GM12878 (cell line): ENCODE measurements at regions of chr20 and their contacts with region 1.

Region 1: DNA sequence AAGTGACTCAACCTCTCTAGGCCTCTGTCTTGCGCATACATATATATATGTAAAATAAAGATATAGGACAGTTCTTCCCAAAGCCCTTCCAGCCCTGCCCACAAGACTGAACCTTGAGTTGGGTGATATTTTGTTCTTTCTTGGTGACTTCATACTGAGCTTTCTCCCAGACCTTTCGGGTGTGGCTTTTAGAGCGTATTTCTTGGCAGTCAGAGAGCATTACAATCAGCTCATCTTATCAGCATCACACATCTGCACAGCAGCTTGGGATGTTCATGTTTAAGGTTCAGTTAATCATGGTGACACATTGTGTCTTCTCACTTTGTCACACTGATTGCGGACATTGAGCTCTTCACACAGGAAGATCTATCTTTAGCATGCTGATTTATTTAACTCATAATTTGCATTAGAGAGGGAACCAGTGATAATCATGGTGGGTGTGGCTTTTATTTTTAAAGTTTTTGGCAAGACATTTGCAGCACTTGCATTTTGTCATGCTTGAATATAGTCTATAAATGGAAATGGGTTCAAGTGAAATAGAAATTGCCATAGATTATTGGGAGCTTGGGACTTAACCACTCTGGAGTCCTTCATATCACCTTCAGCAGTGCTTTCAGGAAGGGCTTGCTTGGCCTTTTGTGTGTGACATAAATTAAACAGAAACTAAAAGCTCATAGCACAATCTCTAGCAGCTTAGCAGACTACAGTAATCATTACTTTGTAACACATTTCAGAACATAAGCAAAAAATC is 8.3 kb downstream of the KIF3B start:
- DNase-seq: peak; percentile 84
- ATAC-seq: peak; percentile 85
- H3K4me3 ChIP-seq: peak overlapping the region; percentile 54
- H3K27ac ChIP-seq: peak overlapping the region; percentile 92
- H3K4me1 ChIP-seq: peaks cover 31% of the 10 kb centered on the region
- H3K27me3 ChIP-seq: no peaks in the 10 kb centered on the region
- CTCF ChIP-seq: no peak
- EP300 ChIP-seq: peak in 1 of 2 experiments; percentile 44; a peak in 1 of 4 replicates
- POLR2A ChIP-seq: peak; percentile 65
- RAD21 ChIP-seq: no peak

Region 2: GRCh38 chr20:31803552-31804291 is 482.1 kb before region 1 on chr20:
- CTCF ChIA-PET with region 1: no interaction called
- POLR2A ChIA-PET with region 1: no interaction called
- RAD21 ChIA-PET with region 1: no interaction called
- SMC1A ChIA-PET with region 1: no interaction called
- in situ Hi-C with region 1: no loop called
- intact Hi-C with region 1: no loop called
- DNase-seq: no peak
- ATAC-seq: no peak
- H3K4me3 ChIP-seq: no peak overlapping the region
- H3K27ac ChIP-seq: no peak overlapping the region
- H3K4me1 ChIP-seq: no peaks in the 10 kb centered on the region
- H3K27me3 ChIP-seq: no peaks in the 10 kb centered on the region
- CTCF ChIP-seq: no peak
- EP300 ChIP-seq: no peak
- POLR2A ChIP-seq: no peak
- RAD21 ChIP-seq: no peak

Region 3: DNA sequence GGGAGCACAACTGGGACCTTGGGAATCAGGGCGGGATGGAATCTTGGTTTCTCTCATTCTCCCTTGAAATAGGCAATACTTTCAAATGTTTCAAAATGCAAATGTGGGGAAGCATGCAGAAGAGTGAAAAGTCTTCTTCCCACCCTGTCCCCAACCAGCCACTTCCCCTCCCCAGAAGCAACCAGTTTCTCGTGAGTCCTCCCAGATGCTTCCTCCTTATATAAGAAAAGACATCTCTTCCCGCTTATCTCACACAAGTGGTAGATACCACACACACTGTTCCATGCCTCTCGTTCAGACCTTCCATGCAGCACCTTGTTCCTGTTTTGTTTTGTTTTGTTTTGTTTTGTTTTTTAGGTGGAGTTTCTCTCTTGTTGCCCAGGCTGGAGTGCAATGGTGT is 208.6 kb before region 1 on chr20:
- CTCF ChIA-PET with region 1: no interaction called
- POLR2A ChIA-PET with region 1: no interaction called
- RAD21 ChIA-PET with region 1: no interaction called
- SMC1A ChIA-PET with region 1: no interaction called
- in situ Hi-C with region 1: no loop called
- intact Hi-C with region 1: no loop called
- DNase-seq: no peak
- ATAC-seq: no peak
- H3K4me3 ChIP-seq: no peak overlapping the region
- H3K27ac ChIP-seq: no peak overlapping the region
- H3K4me1 ChIP-seq: no peaks in the 10 kb centered on the region
- H3K27me3 ChIP-seq: no peaks in the 10 kb centered on the region
- CTCF ChIP-seq: no peak
- EP300 ChIP-seq: no peak
- POLR2A ChIP-seq: no peak
- RAD21 ChIP-seq: no peak

Region 4: DNA sequence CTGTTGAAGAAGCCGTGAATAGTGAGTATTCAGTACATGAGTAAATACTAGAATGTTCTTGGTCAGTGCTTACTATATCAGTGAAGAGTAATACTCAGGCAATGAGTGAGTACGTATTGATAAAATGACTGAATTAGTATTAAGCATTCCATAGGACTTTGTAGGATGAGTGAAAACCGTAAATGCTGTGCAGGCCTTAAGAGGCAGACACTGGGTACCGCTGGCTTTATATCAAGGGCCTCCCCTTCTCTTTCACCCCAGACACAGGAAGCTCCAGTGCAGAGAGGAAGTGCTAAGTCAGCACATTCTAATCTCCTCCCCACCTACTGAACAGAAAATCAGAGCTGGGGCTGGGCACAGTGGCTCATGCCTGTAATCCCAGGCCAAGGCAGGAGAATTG is 53.9 kb before region 1 on chr20:
- CTCF ChIA-PET with region 1: interaction called, 3 read pairs
- POLR2A ChIA-PET with region 1: interaction called, 9 read pairs
- RAD21 ChIA-PET with region 1: interaction called, 15 read pairs
- SMC1A ChIA-PET with region 1: interaction called, 15 read pairs
- in situ Hi-C with region 1: no loop called
- intact Hi-C with region 1: no loop called
- DNase-seq: no peak
- ATAC-seq: peak; percentile 71
- H3K4me3 ChIP-seq: no peak overlapping the region
- H3K27ac ChIP-seq: peak overlapping the region; percentile 9; the same call in 1 of the 2 replicates
- H3K4me1 ChIP-seq: peaks cover 10% of the 10 kb centered on the region; the same call in 1 of the 2 replicates
- H3K27me3 ChIP-seq: no peaks in the 10 kb centered on the region
- CTCF ChIP-seq: no peak
- EP300 ChIP-seq: no peak
- POLR2A ChIP-seq: no peak
- RAD21 ChIP-seq: no peak

Region 5: DNA sequence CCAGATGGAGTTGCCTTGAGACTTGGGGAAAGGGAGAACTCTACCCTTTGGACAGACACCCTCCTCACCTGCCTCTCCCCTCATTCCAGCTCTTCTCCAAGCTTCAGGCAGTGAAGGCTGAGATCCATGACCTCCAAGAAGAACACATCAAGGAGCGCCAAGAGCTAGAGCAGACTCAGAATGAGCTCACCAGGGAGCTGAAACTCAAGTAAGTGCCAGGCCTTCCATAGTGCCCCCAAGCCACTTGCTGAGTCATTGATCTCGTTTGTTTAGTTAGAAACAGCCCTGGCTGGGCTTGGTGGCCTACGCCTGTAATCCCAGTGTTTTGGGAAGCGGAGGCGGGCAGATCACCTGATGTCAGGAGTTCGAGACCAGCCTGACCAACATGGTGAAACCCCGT is 30.9 kb after region 1 on chr20:
- CTCF ChIA-PET with region 1: interaction called, 4 read pairs
- POLR2A ChIA-PET with region 1: interaction called, 3 read pairs
- RAD21 ChIA-PET with region 1: interaction called, 3 read pairs
- SMC1A ChIA-PET with region 1: interaction called, 11 read pairs
- in situ Hi-C with region 1: no loop called
- intact Hi-C with region 1: no loop called
- DNase-seq: no peak
- ATAC-seq: no peak
- H3K4me3 ChIP-seq: no peak overlapping the region
- H3K27ac ChIP-seq: no peak overlapping the region
- H3K4me1 ChIP-seq: no peaks in the 10 kb centered on the region; the same call in 1 of the 2 replicates
- H3K27me3 ChIP-seq: no peaks in the 10 kb centered on the region
- CTCF ChIP-seq: no peak
- EP300 ChIP-seq: no peak
- POLR2A ChIP-seq: no peak
- RAD21 ChIP-seq: no peak

Region 6: DNA sequence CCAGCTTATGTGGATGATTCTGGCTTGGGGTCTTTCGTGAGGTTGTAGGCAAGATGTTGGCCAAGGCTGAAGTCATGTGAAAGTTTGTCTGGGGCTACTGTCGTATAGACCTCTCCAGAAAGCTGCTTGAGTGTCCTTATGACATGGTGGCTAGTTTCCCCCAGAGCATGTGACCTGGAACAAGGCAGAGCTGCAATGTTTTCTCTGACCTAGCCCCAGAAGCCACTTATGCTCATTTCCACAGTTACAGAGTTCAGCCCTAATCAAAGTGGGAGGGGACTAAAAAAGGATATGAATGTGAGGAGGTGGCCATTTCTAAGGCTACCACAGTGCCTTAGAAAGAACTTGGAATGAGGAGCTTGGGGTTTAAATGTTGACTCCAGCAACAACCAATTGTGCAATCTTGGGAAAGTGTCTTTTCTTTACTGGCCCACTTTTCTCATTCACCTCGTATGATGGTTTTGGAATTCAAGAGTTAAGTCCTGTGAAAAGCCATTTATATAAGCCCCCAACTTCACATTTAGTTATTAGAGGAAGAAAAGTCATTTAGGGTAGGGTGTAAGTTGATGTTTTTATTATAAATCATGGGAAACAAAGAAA is 66.4 kb after region 1 on chr20:
- CTCF ChIA-PET with region 1: interaction called, 12 read pairs
- POLR2A ChIA-PET with region 1: interaction called, 38 read pairs
- RAD21 ChIA-PET with region 1: interaction called, 28 read pairs
- SMC1A ChIA-PET with region 1: interaction called, 23 read pairs
- in situ Hi-C with region 1: no loop called
- intact Hi-C with region 1: no loop called
- DNase-seq: no peak
- ATAC-seq: no peak
- H3K4me3 ChIP-seq: no peak overlapping the region
- H3K27ac ChIP-seq: no peak overlapping the region
- H3K4me1 ChIP-seq: peaks cover 32% of the 10 kb centered on the region
- H3K27me3 ChIP-seq: no peaks in the 10 kb centered on the region
- CTCF ChIP-seq: no peak
- EP300 ChIP-seq: no peak
- POLR2A ChIP-seq: no peak
- RAD21 ChIP-seq: no peak

Region 7: GRCh38 chr20:32378461-32378860 is 92.7 kb after region 1 on chr20:
- CTCF ChIA-PET with region 1: no interaction called
- POLR2A ChIA-PET with region 1: no interaction called
- RAD21 ChIA-PET with region 1: no interaction called
- SMC1A ChIA-PET with region 1: no interaction called
- in situ Hi-C with region 1: no loop called
- intact Hi-C with region 1: no loop called
- DNase-seq: no peak
- ATAC-seq: no peak
- H3K4me3 ChIP-seq: no peak overlapping the region
- H3K27ac ChIP-seq: no peak overlapping the region
- H3K4me1 ChIP-seq: no peaks in the 10 kb centered on the region
- H3K27me3 ChIP-seq: no peaks in the 10 kb centered on the region
- CTCF ChIP-seq: no peak
- EP300 ChIP-seq: no peak
- POLR2A ChIP-seq: no peak
- RAD21 ChIP-seq: no peak